ENCODE measurements at regions of chr10 and their contacts with region 1.

Region 1: DNA sequence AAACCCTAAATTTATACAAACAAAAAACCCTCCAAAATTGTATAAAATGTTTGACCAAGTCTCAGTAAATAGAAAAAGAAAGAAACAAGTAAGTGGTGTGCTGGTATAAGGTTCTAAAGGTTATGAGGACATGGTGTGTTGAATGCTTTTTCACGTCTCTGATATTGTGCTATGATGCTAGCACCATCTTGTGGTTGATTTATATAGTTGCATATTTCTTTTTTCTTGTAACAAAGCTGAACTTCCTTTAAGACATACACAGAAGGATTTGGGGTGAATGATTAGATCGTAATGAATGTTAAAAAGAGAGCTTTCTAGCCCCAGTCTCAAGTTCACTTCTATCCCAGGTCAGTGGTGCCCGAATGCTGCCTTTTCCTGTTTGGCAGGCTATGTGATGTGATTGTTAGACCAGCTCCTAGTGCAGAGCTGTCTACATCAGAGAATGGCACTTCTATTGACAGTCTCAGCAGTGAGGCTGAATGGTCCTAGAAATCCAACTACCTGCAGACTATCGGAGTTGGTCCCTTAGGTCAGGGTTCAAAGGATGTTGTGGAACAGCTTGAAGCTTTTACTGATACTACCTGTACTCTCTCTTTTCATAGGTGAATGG is 25.0 kb downstream of the VTI1A start:
- DNase-seq: peak; percentile 65
- CTCF ChIP-seq: peak; percentile 59

Region 2: GRCh38 chr10:112307358-112308124 is 164.4 kb before region 1 on chr10:
- CTCF ChIA-PET with region 1: interaction called, 15 read pairs
- POLR2A ChIA-PET with region 1: no interaction called
- DNase-seq: peak; percentile 76
- CTCF ChIP-seq: peak; percentile 84

Region 3: GRCh38 chr10:112434988-112435619 is 36.9 kb before region 1 on chr10:
- CTCF ChIA-PET with region 1: interaction called, 12 read pairs
- POLR2A ChIA-PET with region 1: no interaction called
- DNase-seq: no peak
- CTCF ChIP-seq: peak; percentile 39

Region 4: DNA sequence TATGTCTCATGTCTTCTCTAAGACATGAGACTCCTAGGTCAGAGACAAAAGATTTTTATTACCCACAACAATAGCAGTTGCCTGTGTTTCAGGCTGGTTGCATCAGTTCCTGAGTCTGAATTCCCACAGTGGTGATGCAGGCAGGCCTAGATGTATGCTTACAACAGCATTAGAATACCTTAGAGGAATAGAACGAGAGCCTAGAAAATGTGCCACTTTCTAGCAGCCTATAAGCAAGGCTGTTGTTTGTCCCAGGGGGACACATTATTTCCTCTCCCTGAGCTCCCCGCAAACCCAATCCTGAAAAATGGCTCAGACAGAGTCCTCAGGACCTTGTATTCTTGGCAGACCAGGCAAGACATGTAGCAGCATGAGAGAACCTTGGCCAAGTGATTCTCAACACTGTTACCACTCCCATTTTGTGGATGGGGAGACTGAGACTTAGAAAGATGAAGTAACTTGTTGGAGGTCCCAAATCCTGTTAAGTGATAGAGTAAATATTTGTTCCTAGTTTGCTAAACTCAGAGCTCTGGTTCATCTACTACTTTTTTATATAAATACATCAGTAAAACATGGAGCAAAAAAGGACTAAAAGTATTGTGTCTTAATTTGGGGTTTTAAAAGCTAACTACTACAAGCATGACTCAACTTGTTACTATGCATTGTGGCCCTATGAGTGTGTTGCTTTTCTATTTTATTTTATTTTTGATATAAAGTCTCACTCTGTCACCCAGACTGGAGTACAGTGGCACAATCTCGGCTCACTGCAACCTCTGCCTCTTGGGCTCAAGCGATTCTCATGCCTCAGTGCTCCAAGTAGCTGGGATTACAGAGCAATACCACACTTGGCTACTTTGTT is 10.7 kb before region 1 on chr10:
- CTCF ChIA-PET with region 1: interaction called, 31 read pairs
- POLR2A ChIA-PET with region 1: no interaction called
- DNase-seq: no peak
- CTCF ChIP-seq: no peak

Region 5: DNA sequence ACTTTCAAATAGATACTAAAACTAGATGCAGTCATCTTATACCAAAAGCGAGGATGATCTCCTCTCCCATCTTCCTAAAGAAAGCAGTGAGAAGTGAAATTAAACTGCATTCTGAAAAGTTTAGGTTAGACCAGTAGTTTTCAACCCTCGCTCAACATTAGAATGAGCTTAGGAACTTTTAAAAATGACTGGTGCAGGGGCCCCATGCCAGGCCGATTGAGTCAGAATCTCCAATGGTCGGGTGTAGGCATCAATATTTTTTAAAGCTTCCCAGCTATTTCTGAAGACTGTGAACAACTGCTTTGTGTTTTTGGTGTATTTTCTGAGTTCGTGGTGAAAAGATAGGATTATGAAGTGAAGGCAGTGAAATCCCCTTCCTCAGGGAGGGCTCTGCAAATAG is 121.0 kb after region 1 on chr10:
- CTCF ChIA-PET with region 1: no interaction called
- POLR2A ChIA-PET with region 1: no interaction called
- DNase-seq: no peak
- CTCF ChIP-seq: no peak

Region 6: DNA sequence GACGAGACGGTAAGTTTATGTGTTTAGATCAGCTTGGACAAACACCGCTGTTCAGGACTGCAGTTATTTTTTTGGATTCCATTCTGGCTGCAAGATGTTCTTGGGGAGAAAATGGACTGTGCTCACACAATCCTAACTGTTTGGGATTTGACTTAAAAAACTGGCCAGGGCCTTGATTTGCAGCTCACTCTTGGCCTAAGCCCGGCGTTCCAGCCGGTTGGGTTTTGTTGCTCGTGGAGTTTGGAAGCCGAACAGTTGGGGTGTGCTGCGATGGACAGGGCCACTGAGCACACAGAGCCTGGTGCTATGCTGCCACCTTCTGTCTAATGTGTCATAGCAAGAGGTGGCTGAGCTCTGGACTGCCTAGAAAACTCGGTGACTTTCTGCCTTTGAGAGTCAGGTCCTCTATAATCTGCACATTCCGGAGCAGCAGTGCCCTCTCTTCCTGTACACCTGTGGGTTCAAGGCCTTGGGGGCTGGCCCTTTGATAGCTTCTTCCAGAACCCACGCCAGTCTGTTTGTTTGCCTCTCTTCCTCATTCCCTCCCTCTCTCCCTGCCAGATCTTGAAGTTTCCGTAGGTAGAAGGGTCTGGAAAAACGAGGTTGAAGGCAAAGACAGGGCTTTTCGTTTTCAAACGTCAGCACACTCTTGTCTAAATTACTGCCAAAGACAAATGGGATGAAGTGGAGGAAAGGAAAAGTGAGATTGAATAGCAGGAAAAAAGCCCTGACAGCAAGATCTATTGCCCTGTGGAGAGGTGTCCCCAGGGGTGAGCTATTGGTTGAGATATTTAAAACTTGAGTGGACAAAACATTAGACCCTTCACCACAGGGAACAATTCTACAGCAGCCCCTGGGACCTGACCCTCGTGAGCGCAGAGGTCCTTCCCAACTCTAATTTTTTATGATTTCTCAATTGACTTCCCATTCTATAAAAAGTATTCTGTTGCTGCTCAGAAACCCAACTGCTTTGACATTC is 913.3 kb after region 1 on chr10:
- CTCF ChIA-PET with region 1: interaction called, 10 read pairs
- POLR2A ChIA-PET with region 1: no interaction called
- DNase-seq: peak; percentile 53
- CTCF ChIP-seq: peak; percentile 67